Heart left ventricle (tissue), 16 donors: ENCODE measurements at regions of chr1 and their contacts with region 1.

Region 1: DNA sequence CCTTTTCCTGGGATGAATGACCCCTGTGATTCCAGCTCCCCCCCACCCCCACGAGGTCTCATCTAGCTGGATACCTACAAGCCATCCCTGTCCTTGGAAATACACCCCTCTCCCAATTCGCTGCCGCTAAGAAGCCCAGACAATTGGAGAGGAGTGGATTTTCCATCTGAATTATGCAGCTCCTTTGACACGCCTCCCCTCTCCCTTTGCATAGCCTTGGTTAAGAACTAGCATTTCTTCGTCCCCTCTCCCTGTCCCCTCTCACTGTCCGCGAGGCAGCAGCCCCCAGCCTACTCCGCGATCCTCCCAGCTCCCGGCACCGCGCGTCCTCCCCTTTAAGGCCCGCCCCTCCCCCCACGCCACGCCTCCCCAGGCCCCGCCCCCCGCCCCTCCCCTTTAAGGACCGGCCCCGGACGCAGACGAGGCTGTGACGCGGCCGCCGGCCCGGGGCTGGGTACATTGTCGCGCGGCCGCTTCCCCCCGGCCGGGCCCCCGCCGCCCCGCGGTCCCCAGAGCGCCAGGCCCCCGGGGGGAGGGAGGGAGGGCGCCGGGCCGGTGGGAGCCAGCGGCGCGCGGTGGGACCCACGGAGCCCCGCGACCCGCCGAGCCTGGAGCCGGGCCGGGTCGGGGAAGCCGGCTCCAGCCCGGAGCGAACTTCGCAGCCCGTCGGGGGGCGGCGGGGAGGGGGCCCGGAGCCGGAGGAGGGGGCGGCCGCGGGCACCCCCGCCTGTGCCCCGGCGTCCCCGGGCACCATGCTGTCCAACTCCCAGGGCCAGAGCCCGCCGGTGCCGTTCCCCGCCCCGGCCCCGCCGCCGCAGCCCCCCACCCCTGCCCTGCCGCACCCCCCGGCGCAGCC is at the start of gene MAPKAPK2:
- DNase-seq: peak; percentile 85 to 91 (median 90)
- ATAC-seq: peak; percentile 59 to 88 (median 77)
- H3K4me3 ChIP-seq: peak within 1 kb of the TSS; percentile 42 to 97 (median 84)
- H3K27ac ChIP-seq: peak within 1 kb of the TSS; percentile 90 to 99 (median 98)
- H3K4me1 ChIP-seq: peaks cover 8 to 60% (median 36%) of the 10 kb centered on the region in 12 donors
- H3K27me3 ChIP-seq: no peaks in the 10 kb centered on the region
- CTCF ChIP-seq: no peak
- POLR2A ChIP-seq: peak in 1 of 2 donors; percentile 53
- total RNA-seq, gene MAPKAPK2: 163 to 327 (median 223) TPM

Region 2: GRCh38 chr1:206635080-206635977 is 49.4 kb before region 1 on chr1 and contains the start of gene DYRK3:
- intact Hi-C with region 1: no loop called
- DNase-seq: peak; percentile 96 to 97 (median 97)
- ATAC-seq: peak; percentile 94 to 99 (median 98)
- H3K4me3 ChIP-seq: peak within 1 kb of the TSS; percentile 73 to 97 (median 90)
- H3K27ac ChIP-seq: peak within 1 kb of the TSS; percentile 19 to 95 (median 89)
- H3K4me1 ChIP-seq: peaks cover 0 to 54% (median 26%) of the 10 kb centered on the region in 12 donors
- H3K27me3 ChIP-seq: no peaks in the 10 kb centered on the region
- CTCF ChIP-seq: peak in 6 of 12 donors; percentile 9 to 41 (median 29)
- POLR2A ChIP-seq: peak; percentile 41 to 99
- total RNA-seq, gene DYRK3: 11.2 to 32.5 (median 15.9) TPM

Region 3: GRCh38 chr1:206658264-206658980 is 26.3 kb before region 1 on chr1:
- intact Hi-C with region 1: loop called in 3 of 10 experiments (anchors 2 kb)
- DNase-seq: peak; percentile 60 to 82 (median 64)
- ATAC-seq: peak; percentile 48 to 59 (median 56)
- H3K4me3 ChIP-seq: peak overlapping the region in 9 of 12 donors; percentile 1 to 46 (median 31)
- H3K27ac ChIP-seq: peak overlapping the region; percentile 78 to 96 (median 88)
- H3K4me1 ChIP-seq: peaks cover 5 to 92% (median 59%) of the 10 kb centered on the region in 12 donors
- H3K27me3 ChIP-seq: no peaks in the 10 kb centered on the region
- CTCF ChIP-seq: peak; percentile 69 to 90 (median 87)
- POLR2A ChIP-seq: peak in 1 of 2 donors; percentile 17

Region 4: DNA sequence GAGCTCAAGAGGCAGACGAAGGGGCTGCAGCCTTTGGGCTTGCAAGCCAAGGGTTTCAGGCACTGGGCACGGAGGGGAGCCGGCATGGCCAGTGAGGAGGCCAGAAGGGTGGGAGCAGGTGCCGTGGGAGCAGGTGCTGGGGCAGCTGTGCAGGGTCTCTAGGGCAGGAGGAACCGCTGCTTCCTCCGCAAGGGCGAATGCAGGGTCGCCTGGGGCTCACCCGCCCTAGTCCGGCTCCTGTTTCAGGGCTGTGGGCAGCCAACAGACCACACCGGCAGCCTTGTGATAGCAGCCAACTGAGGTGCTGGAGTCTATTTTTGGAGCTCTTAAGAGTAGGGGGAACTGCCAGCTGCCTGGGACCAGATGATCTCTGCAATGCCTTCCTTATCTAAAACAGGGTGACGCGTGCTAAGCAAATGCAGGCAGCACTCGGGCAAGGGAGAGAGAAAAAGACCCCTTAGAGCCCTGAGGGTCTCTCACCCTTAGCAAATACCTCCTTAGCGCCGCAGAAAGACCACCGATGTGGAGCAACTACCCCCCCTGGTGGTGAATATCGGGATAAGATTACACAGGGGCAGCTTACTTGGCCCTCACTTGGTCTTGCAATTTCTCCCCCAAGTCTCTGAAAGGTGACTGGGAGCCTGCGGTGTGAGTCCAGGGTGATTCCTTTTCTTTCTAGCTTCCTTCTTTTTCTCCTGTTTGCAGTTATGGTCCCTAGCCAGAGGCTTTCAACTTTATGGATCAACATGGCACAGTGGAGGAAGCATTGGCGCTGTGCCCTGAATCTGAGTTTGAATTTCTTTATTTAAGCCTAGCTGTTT is 20.7 kb before region 1 on chr1:
- intact Hi-C with region 1: loop called in 5 of 10 experiments (anchors 1 to 2 kb)
- DNase-seq: peak; percentile 75 to 86 (median 76)
- ATAC-seq: peak; percentile 71 to 80 (median 76)
- H3K4me3 ChIP-seq: peak overlapping the region in 10 of 12 donors; percentile 1 to 46 (median 30)
- H3K27ac ChIP-seq: peak overlapping the region; percentile 78 to 96 (median 88)
- H3K4me1 ChIP-seq: peaks cover 0 to 62% (median 27%) of the 10 kb centered on the region in 12 donors
- H3K27me3 ChIP-seq: peaks cover 0 to 10% (median 0%) of the 10 kb centered on the region in 9 donors
- CTCF ChIP-seq: peak; percentile 67 to 90 (median 84)
- POLR2A ChIP-seq: peak in 1 of 2 donors; percentile 59

Region 5: GRCh38 chr1:206705191-206705590 is 20.5 kb after region 1 on chr1:
- intact Hi-C with region 1: loop called in 1 of 10 experiments (anchors 2 kb)
- DNase-seq: peak in 1 of 5 donors; percentile 56
- ATAC-seq: peak; percentile 18 to 63 (median 28)
- H3K4me3 ChIP-seq: no peak overlapping the region
- H3K27ac ChIP-seq: peak overlapping the region in 11 of 12 donors; percentile 42 to 82 (median 70)
- H3K4me1 ChIP-seq: peaks cover 47 to 100% (median 94%) of the 10 kb centered on the region in 12 donors
- H3K27me3 ChIP-seq: no peaks in the 10 kb centered on the region
- CTCF ChIP-seq: no peak
- POLR2A ChIP-seq: no peak